AG04450 (cell line): ENCODE measurements at regions of chr15 and their contacts with region 1.

Region 1: GRCh38 chr15:44099671-44100070 is 95.4 kb downstream of the FRMD5 start:
- DNase-seq: no peak
- H3K4me3 ChIP-seq: no peak overlapping the region
- H3K27ac ChIP-seq: no peak overlapping the region
- H3K27me3 ChIP-seq: no peaks in the 10 kb centered on the region
- CTCF ChIP-seq: no peak

Region 2: GRCh38 chr15:44058126-44058525 is 41.5 kb before region 1 on chr15:
- CTCF ChIA-PET with region 1: no interaction called
- POLR2A ChIA-PET with region 1: no interaction called
- DNase-seq: no peak
- H3K4me3 ChIP-seq: no peak overlapping the region
- H3K27ac ChIP-seq: no peak overlapping the region
- H3K27me3 ChIP-seq: no peaks in the 10 kb centered on the region
- CTCF ChIP-seq: no peak

Region 3: GRCh38 chr15:44261007-44261706 is 161.5 kb after region 1 on chr15:
- CTCF ChIA-PET with region 1: interaction called, 10 read pairs
- POLR2A ChIA-PET with region 1: no interaction called
- DNase-seq: no peak
- H3K4me3 ChIP-seq: no peak overlapping the region
- H3K27ac ChIP-seq: no peak overlapping the region
- H3K27me3 ChIP-seq: peaks cover 12% of the 10 kb centered on the region
- CTCF ChIP-seq: no peak